ENCODE measurements at regions of chr1 and their contacts with region 1.

Region 1: DNA sequence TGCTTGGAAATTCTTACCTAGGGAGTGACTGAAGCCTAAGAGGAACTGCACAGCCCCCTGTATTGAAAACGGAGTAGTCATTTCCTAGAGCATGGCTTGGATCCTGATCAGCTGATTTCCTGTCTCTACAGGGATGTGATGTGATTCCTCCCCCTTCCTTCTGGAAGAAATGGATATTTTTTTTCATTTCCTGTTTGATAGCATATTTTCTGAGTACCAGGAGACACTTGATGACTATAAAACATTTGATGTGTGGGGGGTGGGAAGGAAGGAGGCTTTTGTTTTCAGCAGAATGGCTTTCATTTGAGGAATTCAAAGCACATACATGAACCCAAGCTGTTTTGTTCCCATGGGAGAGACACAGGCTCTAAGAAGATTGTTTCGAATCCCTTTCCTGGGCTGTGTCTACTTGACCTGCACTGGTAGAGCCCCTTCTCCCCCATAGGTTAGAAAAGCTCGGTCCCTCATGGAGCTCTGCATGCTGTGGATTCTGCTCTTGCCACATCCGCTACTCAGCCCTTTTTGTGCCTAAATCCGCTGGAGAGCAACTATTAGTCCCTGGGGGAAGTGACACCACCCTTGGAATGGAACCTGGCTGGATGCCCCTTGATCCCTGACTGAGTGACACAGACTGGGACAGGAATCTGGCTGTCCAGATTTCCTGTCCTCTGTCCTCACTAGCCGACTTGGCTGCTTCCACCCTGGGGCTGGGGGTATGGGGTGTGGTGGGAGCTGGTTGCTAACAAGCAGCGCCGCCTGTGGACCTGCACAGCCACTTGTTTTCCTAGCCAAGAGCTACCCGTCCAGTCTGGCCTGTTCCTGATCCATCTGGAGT is 71.8 kb upstream of the MACF1 start:
- DNase-seq: peak; percentile 93
- H3K4me3 ChIP-seq: peak overlapping the region; percentile 20
- H3K27ac ChIP-seq: peak overlapping the region; percentile 87
- H3K4me1 ChIP-seq: peaks cover 54% of the 10 kb centered on the region
- H3K27me3 ChIP-seq: no peaks in the 10 kb centered on the region
- CTCF ChIP-seq: peak; percentile 51

Region 2: DNA sequence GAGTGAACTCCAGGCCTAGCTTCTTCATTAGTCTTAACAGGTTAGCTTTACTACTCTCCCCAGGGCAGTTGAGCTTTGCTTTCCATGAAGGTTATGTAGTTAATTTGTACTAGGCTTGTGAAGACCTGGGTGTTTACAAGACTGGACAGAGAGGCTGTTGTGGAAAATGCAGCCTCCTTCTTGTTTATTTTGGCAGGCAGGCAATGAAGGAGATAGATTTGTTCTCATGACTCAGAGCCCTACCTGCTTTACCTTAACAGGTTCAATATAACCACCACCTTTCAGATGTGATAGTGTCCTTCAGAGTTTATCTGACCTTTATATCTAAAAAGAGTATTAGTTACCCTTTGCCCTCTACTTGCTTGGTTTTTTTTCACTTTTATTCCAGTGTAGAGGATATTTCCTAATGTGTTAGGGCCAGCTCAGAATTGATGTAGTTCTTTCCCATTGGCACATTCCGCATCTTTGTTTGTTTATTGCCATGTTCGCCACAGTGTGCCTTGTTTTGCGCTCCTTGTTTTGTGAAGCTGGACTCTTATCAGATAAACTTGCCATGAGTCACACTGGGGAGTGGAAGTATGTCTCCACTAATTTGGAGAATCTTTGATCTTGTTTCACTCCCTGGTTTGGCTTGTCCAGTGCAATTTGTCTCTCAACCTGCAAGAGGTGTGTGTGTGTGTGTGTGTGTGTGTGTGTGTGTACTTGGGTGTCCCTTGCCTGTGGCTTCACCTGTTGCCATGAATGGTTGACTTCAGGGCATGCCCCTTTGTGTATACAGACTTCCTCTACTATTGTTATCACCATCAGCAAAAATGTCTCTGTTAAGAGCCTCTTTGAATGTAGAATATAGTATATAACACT is 15.6 kb before region 1 on chr1:
- CTCF ChIA-PET with region 1: no interaction called
- POLR2A ChIA-PET with region 1: no interaction called
- intact Hi-C with region 1: no loop called
- DNase-seq: no peak
- H3K4me3 ChIP-seq: no peak overlapping the region
- H3K27ac ChIP-seq: no peak overlapping the region
- H3K4me1 ChIP-seq: peaks cover 10% of the 10 kb centered on the region
- H3K27me3 ChIP-seq: no peaks in the 10 kb centered on the region
- CTCF ChIP-seq: no peak

Region 3: DNA sequence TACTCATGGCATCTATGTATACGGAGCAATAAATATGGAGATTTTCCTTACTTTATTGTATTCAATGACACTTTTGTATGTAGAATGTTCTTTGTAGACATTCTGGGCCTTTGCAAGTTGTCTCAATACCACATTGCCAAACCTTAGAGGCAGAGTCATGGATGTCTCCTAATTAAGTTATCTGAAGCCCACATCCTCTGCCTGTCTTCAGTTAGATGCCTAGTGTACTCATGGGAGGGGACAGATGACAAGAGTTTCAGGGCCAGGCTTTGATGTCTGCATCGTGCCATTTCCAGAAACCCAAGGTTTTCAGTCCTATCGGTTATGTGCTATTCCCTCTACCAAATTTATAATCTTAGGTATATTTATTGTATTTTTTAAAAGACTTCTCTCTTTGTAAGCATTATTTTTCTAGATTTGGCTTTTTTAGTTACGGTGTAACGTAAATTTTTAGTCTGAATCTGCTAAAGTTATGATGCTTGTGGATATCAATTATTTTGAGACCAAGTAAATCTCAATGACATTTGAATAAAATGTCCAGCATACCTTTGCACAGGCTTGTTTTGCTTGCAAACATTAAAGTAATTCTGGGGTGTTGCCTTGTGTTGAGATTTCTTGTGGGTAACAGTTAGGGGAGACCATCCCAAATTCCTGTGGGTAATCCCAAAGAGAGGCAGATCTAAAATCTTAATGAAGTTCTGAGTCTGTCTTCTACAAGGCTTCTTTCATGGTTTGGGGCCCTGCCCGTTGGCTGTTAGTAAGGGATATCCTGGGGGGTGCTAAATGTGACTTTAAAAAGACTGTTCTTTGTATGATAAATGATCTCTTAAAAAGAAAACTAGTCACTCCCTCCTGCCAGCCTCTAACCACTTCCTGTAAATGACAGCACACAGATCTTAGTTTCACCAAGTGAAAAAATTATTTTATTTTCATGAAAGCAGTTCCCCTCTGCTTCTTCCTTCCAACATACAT is 63.8 kb after region 1 on chr1:
- CTCF ChIA-PET with region 1: interaction called, 10 read pairs
- POLR2A ChIA-PET with region 1: interaction called, 4 read pairs
- intact Hi-C with region 1: no loop called
- DNase-seq: peak; percentile 82
- H3K4me3 ChIP-seq: no peak overlapping the region
- H3K27ac ChIP-seq: peak overlapping the region; percentile 36
- H3K4me1 ChIP-seq: peaks cover 55% of the 10 kb centered on the region
- H3K27me3 ChIP-seq: no peaks in the 10 kb centered on the region
- CTCF ChIP-seq: no peak

Region 4: GRCh38 chr1:39478126-39478915 is 345.6 kb after region 1 on chr1:
- CTCF ChIA-PET with region 1: no interaction called
- POLR2A ChIA-PET with region 1: no interaction called
- intact Hi-C with region 1: no loop called
- DNase-seq: no peak
- H3K4me3 ChIP-seq: no peak overlapping the region
- H3K27ac ChIP-seq: no peak overlapping the region
- H3K4me1 ChIP-seq: no peaks in the 10 kb centered on the region
- H3K27me3 ChIP-seq: no peaks in the 10 kb centered on the region
- CTCF ChIP-seq: no peak